ENCODE measurements at regions of chr19 and their contacts with region 1.

Region 1: DNA sequence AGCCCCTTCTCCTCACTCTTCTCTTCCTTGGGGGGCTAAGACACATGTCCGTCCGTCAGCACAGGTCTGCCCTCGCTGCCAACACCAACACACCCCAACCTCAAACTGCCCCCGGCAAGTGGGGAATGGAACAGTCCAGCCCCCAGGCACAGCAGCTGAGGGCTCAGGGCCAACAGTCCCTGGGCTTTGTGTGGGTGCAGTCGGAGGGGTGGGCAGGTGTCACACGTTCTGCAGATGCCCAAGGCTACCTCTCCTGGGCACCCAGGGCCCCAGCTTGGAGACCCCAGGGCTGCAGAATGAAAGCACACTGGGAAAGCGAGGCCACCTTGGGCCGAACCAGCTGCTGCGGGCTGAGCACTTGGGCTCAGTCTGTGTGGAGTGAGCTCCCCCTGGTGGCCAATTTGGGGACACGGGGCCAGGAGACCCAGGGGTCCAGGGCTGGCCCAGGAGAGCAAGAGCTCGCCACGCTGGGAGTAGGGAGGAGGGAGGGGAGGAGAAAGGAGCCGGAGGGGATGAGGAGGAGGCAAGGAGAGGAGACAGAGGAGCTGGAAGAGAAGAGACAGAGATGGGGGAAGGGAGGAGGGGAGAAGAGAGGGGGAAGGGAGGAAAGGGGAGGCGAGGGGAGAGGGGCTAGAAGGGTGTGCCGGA is 14.0 kb upstream of the ATP8B3 start:
- DNase-seq: peak; percentile 97
- H3K4me3 ChIP-seq: no peak overlapping the region; a peak in 1 of 4 replicates
- H3K27ac ChIP-seq: no peak overlapping the region
- H3K4me1 ChIP-seq: peaks cover 0 to 7% of the 10 kb centered on the region in 2 experiments; a peak in 1 of 4 replicates
- H3K27me3 ChIP-seq: no peaks in the 10 kb centered on the region
- CTCF ChIP-seq: peak; percentile 96
- EP300 ChIP-seq: no peak
- RAD21 ChIP-seq: peak; percentile 74

Region 2: GRCh38 chr19:1762243-1763117 is 63.6 kb before region 1 on chr19:
- CTCF ChIA-PET with region 1: interaction called, 17 read pairs
- POLR2A ChIA-PET with region 1: no interaction called
- DNase-seq: peak; percentile 41
- H3K4me3 ChIP-seq: no peak overlapping the region
- H3K27ac ChIP-seq: no peak overlapping the region
- H3K4me1 ChIP-seq: no peaks in the 10 kb centered on the region
- H3K27me3 ChIP-seq: peaks cover 95% of the 10 kb centered on the region
- CTCF ChIP-seq: no peak
- EP300 ChIP-seq: no peak
- RAD21 ChIP-seq: no peak

Region 3: GRCh38 chr19:1780272-1780958 is 45.6 kb before region 1 on chr19:
- CTCF ChIA-PET with region 1: interaction called, 17 read pairs
- POLR2A ChIA-PET with region 1: no interaction called
- DNase-seq: peak; percentile 55
- H3K4me3 ChIP-seq: no peak overlapping the region
- H3K27ac ChIP-seq: no peak overlapping the region
- H3K4me1 ChIP-seq: no peaks in the 10 kb centered on the region
- H3K27me3 ChIP-seq: peaks cover 74% of the 10 kb centered on the region
- CTCF ChIP-seq: peak; percentile 27; the same call in 1 of the 2 replicates
- EP300 ChIP-seq: no peak
- RAD21 ChIP-seq: no peak

Region 4: DNA sequence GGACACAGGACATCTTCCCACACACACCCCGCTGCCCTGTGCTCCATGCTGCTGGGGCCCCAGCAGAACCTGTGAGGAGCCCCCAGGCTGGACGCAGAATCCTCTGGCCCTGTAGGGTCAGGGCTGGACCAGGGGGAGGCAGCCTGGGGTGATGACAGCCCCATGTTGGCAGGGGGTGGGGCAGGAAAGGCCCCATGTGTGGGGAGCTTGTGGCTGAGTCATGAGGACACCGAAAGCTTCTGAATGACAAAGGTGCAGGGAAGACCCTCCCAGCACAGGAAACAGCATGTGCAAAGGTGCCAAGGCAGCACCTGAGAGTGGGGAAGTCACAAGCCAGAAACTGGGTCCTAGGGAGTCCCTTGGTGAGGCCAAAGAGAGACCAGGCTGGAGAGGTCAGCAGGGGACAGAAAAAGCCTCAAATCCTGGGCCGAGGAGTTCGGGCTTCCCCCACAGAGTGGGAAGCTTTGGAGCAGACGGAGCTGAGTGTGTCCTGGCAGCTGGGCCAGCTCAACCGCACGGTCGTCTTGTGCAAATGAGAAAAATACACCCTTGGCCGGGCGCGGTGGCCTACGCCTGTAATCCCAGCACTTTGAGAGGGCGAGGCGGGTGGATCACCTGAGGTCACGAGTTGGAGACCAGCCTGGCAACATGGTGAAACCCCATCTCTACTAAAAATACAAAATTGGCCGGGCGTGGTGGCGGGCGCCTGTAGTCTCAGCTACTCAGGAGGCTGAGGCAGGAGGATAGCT is 31.4 kb before region 1 on chr19:
- CTCF ChIA-PET with region 1: interaction called, 51 read pairs
- POLR2A ChIA-PET with region 1: interaction called, 4 read pairs
- DNase-seq: no peak
- H3K4me3 ChIP-seq: no peak overlapping the region
- H3K27ac ChIP-seq: no peak overlapping the region
- H3K4me1 ChIP-seq: peaks cover 0 to 8% of the 10 kb centered on the region in 2 experiments; a peak in 1 of 4 replicates
- H3K27me3 ChIP-seq: no peaks in the 10 kb centered on the region
- CTCF ChIP-seq: no peak
- EP300 ChIP-seq: no peak
- RAD21 ChIP-seq: no peak

Region 5: GRCh38 chr19:1837625-1838105 is 11.6 kb after region 1 on chr19:
- CTCF ChIA-PET with region 1: interaction called, 188 read pairs
- POLR2A ChIA-PET with region 1: no interaction called
- DNase-seq: peak; percentile 95
- H3K4me3 ChIP-seq: no peak overlapping the region; a peak in 1 of 4 replicates
- H3K27ac ChIP-seq: no peak overlapping the region; a peak in 1 of 4 replicates
- H3K4me1 ChIP-seq: peaks cover 0 to 12% of the 10 kb centered on the region in 2 experiments; a peak in 1 of 4 replicates
- H3K27me3 ChIP-seq: no peaks in the 10 kb centered on the region
- CTCF ChIP-seq: peak; percentile 94
- EP300 ChIP-seq: no peak
- RAD21 ChIP-seq: peak; percentile 50